Endothelial cell of umbilical vein (primary cell): ENCODE measurements at regions of chr3 and their contacts with region 1.

Region 1: DNA sequence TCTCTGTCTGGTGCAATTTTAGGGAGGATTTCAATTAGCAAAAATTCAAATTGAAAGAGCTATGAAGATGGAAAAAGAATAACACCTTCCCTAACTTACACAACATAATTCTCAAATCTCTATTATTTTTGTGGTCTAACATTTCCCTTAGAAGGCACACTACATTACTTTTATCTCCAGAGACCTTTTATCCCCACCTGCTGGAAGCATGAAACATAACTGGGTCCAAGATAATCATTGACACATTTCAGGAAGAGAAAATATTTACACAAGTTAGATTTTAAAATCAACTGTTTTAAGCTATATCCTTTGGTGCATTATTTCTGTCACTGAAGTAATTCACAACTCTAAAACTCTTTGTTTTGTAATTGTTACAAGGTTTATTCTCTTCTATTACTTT is 779.5 kb downstream of the ROBO1 start:
- DNase-seq: peak; percentile 26
- H3K4me3 ChIP-seq: no peak overlapping the region
- H3K27ac ChIP-seq: no peak overlapping the region
- H3K4me1 ChIP-seq: peaks cover 2% of the 10 kb centered on the region
- H3K27me3 ChIP-seq: no peaks in the 10 kb centered on the region
- CTCF ChIP-seq: peak in 1 of 2 donors; percentile 11
- POLR2A ChIP-seq: no peak

Region 2: GRCh38 chr3:78659386-78659987 is 328.8 kb before region 1 on chr3:
- CTCF ChIA-PET with region 1: interaction called, 47 read pairs
- POLR2A ChIA-PET with region 1: no interaction called
- dilution Hi-C with region 1: no loop called
- intact Hi-C with region 1: loop called (anchors 1 kb)
- DNase-seq: peak; percentile 52
- H3K4me3 ChIP-seq: no peak overlapping the region
- H3K27ac ChIP-seq: no peak overlapping the region
- H3K4me1 ChIP-seq: no peaks in the 10 kb centered on the region
- H3K27me3 ChIP-seq: no peaks in the 10 kb centered on the region
- CTCF ChIP-seq: peak; percentile 20 to 29
- POLR2A ChIP-seq: no peak

Region 3: DNA sequence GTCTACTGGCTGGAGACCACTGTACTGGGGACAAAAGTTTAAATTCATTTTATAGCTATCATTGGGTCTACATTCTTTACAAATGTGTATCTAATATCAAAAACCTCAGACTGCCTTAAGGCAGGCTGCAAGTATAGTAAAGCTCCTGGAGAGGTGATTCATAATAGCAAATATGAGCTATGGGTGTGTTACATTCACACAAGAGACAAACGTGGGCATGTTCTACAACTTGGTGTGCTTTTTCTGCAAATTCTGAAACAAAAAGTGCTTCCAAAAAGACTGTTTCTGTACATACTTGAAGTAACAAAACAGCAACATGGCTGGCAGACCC is 321.9 kb before region 1 on chr3:
- CTCF ChIA-PET with region 1: interaction called, 25 read pairs
- POLR2A ChIA-PET with region 1: no interaction called
- dilution Hi-C with region 1: no loop called
- intact Hi-C with region 1: no loop called
- DNase-seq: no peak
- H3K4me3 ChIP-seq: no peak overlapping the region
- H3K27ac ChIP-seq: no peak overlapping the region
- H3K4me1 ChIP-seq: no peaks in the 10 kb centered on the region
- H3K27me3 ChIP-seq: no peaks in the 10 kb centered on the region
- CTCF ChIP-seq: no peak
- POLR2A ChIP-seq: no peak

Region 4: DNA sequence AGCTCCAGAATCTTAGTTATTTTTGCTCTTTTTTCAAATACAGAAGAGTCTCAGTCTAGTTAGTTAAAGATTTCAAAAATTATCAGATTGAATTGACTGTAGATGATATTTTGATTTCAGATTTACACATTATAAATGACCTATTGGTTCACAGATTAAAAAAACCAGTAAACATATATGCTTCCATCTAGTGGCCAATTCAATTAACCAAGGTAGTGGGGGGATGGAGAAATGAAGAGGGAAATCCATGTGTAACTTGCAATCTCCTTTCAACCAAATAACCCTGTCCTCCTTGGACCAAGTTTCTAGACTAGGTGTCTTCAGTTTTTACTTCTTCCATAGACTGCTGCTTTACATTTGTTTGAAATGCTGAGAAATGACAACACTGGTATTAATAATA is 10.3 kb before region 1 on chr3:
- CTCF ChIA-PET with region 1: interaction called, 17 read pairs
- POLR2A ChIA-PET with region 1: no interaction called
- dilution Hi-C with region 1: no loop called
- intact Hi-C with region 1: no loop called
- DNase-seq: peak; percentile 37
- H3K4me3 ChIP-seq: no peak overlapping the region
- H3K27ac ChIP-seq: no peak overlapping the region
- H3K4me1 ChIP-seq: peaks cover 13% of the 10 kb centered on the region
- H3K27me3 ChIP-seq: no peaks in the 10 kb centered on the region
- CTCF ChIP-seq: peak; percentile 20 to 26
- POLR2A ChIP-seq: no peak